HCT116 (cell line): ENCODE measurements at regions of chr1 and their contacts with region 1.

Region 1: GRCh38 chr1:11862890-11863289 is 4.1 kb upstream of the NPPB start:
- DNase-seq: no peak
- ATAC-seq: peak; percentile 26; the same call in 1 of the 2 replicates
- H3K4me3 ChIP-seq: no peak overlapping the region
- H3K27ac ChIP-seq: no peak overlapping the region
- H3K4me1 ChIP-seq: peaks cover 4 to 10% of the 10 kb centered on the region in 2 experiments; a peak in 3 of 4 replicates
- H3K27me3 ChIP-seq: peaks cover 41% of the 10 kb centered on the region
- CTCF ChIP-seq: no peak
- POLR2A ChIP-seq: no peak
- RAD21 ChIP-seq: no peak

Region 2: DNA sequence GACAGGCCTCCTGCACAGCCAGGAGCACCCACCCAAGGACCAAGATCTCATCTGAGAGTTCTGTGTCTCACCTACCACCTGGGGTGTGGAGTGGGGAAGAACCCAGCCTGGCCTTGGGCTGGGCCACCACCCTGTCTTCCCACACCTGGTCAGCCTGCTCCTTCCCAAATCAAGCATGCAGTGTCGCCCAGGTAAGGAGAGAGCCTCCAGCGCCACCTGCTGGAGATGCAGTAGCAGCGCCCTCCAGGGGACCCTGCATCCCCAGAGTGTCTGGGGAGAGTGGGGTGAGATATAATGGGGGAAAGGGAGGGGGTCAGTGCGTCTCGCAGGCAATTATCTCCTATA is 31.0 kb after region 1 on chr1:
- CTCF ChIA-PET with region 1: no interaction called
- POLR2A ChIA-PET with region 1: no interaction called
- RAD21 ChIA-PET with region 1: no interaction called
- intact Hi-C with region 1: loop called (anchors 1 kb)
- DNase-seq: peak; percentile 34
- ATAC-seq: peak; percentile 99
- H3K4me3 ChIP-seq: no peak overlapping the region
- H3K27ac ChIP-seq: no peak overlapping the region
- H3K4me1 ChIP-seq: peaks cover 3 to 11% of the 10 kb centered on the region in 2 experiments
- H3K27me3 ChIP-seq: no peaks in the 10 kb centered on the region
- CTCF ChIP-seq: peak; percentile 93 to 99 (median 98)
- POLR2A ChIP-seq: no peak
- RAD21 ChIP-seq: peak; percentile 94